H1 (cell line): ENCODE measurements at regions of chr12 and their contacts with region 1.

Region 1: GRCh38 chr12:49130151-49131050 is 794 bp downstream of the TUBA1B start:
- DNase-seq: peak; percentile 85 to 94
- H3K4me3 ChIP-seq: peak overlapping the region; percentile 91 to 100 (median 94)
- H3K27ac ChIP-seq: peak overlapping the region; percentile 94
- H3K4me1 ChIP-seq: peaks cover 0 to 4% (median 2%) of the 10 kb centered on the region in 4 experiments; a peak in 4 of 7 replicates
- H3K27me3 ChIP-seq: no peaks in the 10 kb centered on the region
- CTCF ChIP-seq: peak; percentile 79 to 98 (median 94)
- EP300 ChIP-seq: peak in 1 of 2 experiments; percentile 28; a peak in 1 of 3 replicates
- POLR2A ChIP-seq: peak; percentile 32 to 85
- RAD21 ChIP-seq: peak; percentile 47 to 55

Region 2: DNA sequence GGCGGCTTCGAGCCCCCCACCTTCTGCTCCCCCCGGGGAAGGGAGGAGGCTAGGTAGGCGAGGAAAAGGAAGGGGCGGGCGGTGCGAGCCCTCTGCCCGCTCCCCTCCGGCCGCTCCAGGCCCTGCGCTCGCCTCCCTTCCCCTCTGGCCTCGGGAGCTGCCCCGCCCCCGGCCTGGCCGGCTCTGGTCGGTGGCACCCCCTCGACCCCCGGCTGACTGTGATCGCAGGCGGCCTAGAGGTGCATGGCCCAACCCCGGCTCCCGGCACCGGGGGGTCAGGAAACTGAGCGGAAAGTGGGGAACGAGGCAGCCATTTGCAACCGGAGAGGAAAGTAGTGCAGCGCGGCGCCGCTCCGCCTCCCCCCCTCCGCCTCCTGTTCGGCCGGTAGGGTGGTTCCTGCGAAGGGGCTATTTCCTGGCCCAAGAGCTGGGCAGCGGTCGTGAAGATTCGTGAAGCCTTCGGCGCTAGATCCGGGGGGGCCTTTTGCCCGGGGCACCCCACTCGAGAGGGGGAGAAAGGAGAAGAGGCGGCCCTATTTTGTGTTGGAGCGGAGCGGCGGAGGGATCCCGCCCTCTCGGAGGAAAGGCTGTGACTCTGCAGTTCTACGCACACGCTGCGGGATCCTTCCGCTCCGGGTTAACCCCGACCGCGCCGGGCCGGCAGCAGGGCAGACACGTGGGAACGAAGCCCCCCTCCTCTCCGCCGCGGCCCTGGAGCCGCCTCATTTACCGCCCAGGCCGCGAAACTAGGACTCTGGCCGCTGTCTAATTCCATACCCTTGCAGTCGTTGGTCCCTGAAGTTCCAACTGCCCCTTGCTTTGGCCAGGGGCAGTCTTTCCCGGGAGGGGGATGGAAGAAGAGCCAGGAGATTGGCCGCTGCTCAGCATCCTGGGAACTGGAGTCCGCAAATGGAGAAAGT is 69.9 kb before region 1 on chr12 and contains the start of gene KMT2D:
- CTCF ChIA-PET with region 1: interaction called, 17 read pairs
- POLR2A ChIA-PET with region 1: interaction called, 32 read pairs
- DNase-seq: peak; percentile 73 to 96
- H3K4me3 ChIP-seq: peak within 1 kb of the TSS; percentile 85 to 97 (median 96)
- H3K27ac ChIP-seq: peak within 1 kb of the TSS; percentile 97
- H3K4me1 ChIP-seq: peaks cover 9 to 36% (median 13%) of the 10 kb centered on the region in 4 experiments
- H3K27me3 ChIP-seq: no peaks in the 10 kb centered on the region
- CTCF ChIP-seq: no peak
- EP300 ChIP-seq: peak in 1 of 2 experiments; percentile 91; a peak in 1 of 3 replicates
- POLR2A ChIP-seq: peak; percentile 14 to 92
- RAD21 ChIP-seq: no peak
- total RNA-seq, gene KMT2D: 86.3 and 92.3 TPM in 2 replicates

Region 3: GRCh38 chr12:49088190-49088931 is 42.0 kb before region 1 on chr12:
- CTCF ChIA-PET with region 1: interaction called, 10 read pairs
- POLR2A ChIA-PET with region 1: interaction called, 66 read pairs
- DNase-seq: peak in 1 of 2 experiments; percentile 81
- H3K4me3 ChIP-seq: peak overlapping the region in 1 of 4 experiments; percentile 45; a peak in 3 of 8 replicates
- H3K27ac ChIP-seq: no peak overlapping the region
- H3K4me1 ChIP-seq: peaks cover 0 to 36% (median 12%) of the 10 kb centered on the region in 4 experiments; a peak in 6 of 7 replicates
- H3K27me3 ChIP-seq: peaks cover 46 to 69% (median 61%) of the 10 kb centered on the region in 4 experiments
- CTCF ChIP-seq: peak; percentile 84 to 93 (median 89)
- EP300 ChIP-seq: no peak
- POLR2A ChIP-seq: no peak
- RAD21 ChIP-seq: peak; percentile 67 to 74

Region 4: DNA sequence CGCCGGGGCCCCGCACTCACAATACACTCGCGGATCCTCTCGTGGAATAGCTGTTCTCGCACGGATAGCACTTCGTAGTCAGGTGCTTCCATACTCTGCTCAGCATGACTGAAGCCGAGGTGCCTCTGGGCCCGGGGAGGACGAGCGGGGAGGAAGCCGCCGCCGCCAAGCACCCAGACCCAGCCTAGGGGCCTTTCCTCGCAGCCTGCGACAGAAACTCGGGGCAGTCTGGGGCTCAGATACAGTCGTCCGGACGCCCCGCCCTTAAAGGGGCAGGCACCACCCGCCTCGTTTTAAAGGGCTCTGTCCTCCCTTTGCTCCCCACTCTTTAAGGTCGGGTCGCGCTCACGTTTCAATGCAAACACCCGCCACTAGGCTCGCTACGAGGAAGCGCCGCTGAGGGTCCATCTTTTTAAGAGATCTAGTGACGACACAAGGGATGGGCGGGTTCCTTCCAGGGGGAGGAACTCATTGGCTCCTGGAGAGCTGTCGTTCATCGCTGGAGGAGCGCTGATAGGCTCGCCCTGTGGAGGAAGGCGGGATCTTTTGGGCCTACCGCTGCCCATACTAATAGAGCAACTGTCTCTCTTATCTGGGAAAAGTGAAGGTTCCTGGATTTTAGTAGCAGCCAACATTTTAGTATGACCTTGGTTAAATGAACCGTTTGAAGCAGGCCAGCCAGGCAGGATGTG is 19.8 kb before region 1 on chr12 and contains the start of gene LMBR1L:
- CTCF ChIA-PET with region 1: interaction called, 18 read pairs
- POLR2A ChIA-PET with region 1: interaction called, 51 read pairs
- DNase-seq: peak; percentile 90 to 93
- H3K4me3 ChIP-seq: peak within 1 kb of the TSS; percentile 74 to 99 (median 92)
- H3K27ac ChIP-seq: peak within 1 kb of the TSS; percentile 55; the same call in 1 of the 2 replicates
- H3K4me1 ChIP-seq: peaks cover 0 to 10% (median 2%) of the 10 kb centered on the region in 4 experiments; a peak in 3 of 7 replicates
- H3K27me3 ChIP-seq: no peaks in the 10 kb centered on the region
- CTCF ChIP-seq: peak; percentile 9 to 43 (median 40); a peak in 2 of 4 replicates
- EP300 ChIP-seq: no peak
- POLR2A ChIP-seq: peak in 1 of 2 experiments; percentile 60; a peak in 1 of 3 replicates
- RAD21 ChIP-seq: peak in 1 of 2 experiments; percentile 5; a peak in 1 of 4 replicates
- total RNA-seq, gene LMBR1L: 47.7 and 49.6 TPM in 2 replicates

Region 5: GRCh38 chr12:49170924-49171323 is 40.5 kb after region 1 on chr12:
- CTCF ChIA-PET with region 1: no interaction called
- POLR2A ChIA-PET with region 1: interaction called, 36 read pairs
- DNase-seq: no peak
- H3K4me3 ChIP-seq: no peak overlapping the region
- H3K27ac ChIP-seq: no peak overlapping the region
- H3K4me1 ChIP-seq: no peaks in the 10 kb centered on the region
- H3K27me3 ChIP-seq: no peaks in the 10 kb centered on the region
- CTCF ChIP-seq: no peak
- EP300 ChIP-seq: no peak
- POLR2A ChIP-seq: no peak
- RAD21 ChIP-seq: no peak

Region 6: DNA sequence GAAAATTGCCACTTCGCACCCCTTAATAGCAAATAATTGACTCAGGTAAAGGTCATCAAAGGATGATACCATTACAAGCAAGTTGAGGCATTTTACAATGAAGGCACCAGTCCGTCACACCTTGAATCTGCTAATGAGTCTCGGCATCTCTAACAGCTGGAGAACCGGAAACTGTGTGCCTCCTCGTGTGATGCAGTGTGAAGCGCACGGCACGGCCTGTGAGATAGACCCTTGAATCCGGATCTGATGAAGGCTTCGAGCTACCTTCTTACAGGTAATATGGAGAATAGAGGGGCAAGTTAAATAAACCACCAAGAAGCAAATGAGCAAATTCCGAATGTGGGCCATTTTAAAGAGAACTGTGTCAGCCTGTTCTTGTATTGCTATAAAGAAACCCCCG is 78.3 kb after region 1 on chr12:
- CTCF ChIA-PET with region 1: interaction called, 3 read pairs
- POLR2A ChIA-PET with region 1: interaction called, 10 read pairs
- DNase-seq: no peak
- H3K4me3 ChIP-seq: no peak overlapping the region
- H3K27ac ChIP-seq: no peak overlapping the region
- H3K4me1 ChIP-seq: no peaks in the 10 kb centered on the region
- H3K27me3 ChIP-seq: peaks cover 0 to 2% (median 0%) of the 10 kb centered on the region in 4 experiments; a peak in 1 of 7 replicates
- CTCF ChIP-seq: no peak
- EP300 ChIP-seq: no peak
- POLR2A ChIP-seq: no peak
- RAD21 ChIP-seq: no peak

Region 7: DNA sequence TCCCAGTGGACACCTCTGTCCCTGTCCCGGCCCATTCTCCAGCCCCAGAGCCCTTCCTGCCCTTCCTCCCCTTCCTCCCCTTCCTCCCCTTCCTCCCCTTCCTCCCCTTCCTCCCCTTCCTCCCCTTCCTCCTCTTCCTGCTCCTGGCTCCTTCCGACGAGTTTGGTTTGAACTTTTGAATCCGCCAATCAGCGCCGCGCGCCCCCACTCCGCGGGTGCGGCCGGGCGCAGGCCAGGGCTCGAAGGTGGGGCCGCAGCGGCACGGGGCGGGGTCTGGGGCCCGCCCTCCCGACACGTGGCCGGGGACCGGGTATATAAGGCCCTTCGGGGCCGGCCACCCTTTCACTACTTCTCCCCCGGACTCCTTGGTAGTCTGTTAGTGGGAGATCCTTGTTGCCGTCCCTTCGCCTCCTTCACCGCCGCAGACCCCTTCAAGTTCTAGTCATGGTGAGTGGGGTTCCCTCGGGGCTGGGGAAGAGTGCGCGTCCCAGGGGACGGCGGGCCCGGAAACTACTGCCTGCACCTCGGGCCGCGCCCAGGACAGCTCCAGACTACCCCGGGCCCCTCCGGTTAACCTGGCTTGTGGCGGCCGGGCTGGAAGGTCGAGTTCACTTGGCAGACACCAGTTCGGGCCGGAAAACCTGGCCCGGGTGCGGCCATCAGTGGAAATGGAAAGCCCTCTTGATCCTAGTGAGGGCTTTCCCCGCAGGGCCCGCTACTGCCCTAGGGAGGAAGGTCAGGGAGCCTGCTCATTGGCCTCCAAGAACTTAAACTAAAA is 134.5 kb after region 1 on chr12 and contains the start of gene TUBA1C:
- CTCF ChIA-PET with region 1: interaction called, 6 read pairs
- POLR2A ChIA-PET with region 1: interaction called, 34 read pairs
- DNase-seq: peak; percentile 85 to 97
- H3K4me3 ChIP-seq: peak within 1 kb of the TSS; percentile 80 to 94 (median 90)
- H3K27ac ChIP-seq: peak within 1 kb of the TSS; percentile 71; the same call in 1 of the 2 replicates
- H3K4me1 ChIP-seq: peaks cover 0 to 2% (median 0%) of the 10 kb centered on the region in 4 experiments; a peak in 4 of 7 replicates
- H3K27me3 ChIP-seq: no peaks in the 10 kb centered on the region
- CTCF ChIP-seq: no peak
- EP300 ChIP-seq: no peak
- POLR2A ChIP-seq: peak; percentile 97 to 99
- RAD21 ChIP-seq: no peak
- total RNA-seq, gene TUBA1C: 504 and 533 TPM in 2 replicates